WTC11 (cell line): ENCODE measurements at regions of chr10 and their contacts with region 1.

Region 1: GRCh38 chr10:42753126-42753506 is 29.5 kb upstream of the BMS1 start:
- DNase-seq: peak; percentile 91
- ATAC-seq: peak; percentile 84
- H3K4me3 Mint-ChIP-seq: peak overlapping the region; percentile 76
- H3K27ac Mint-ChIP-seq: no peak overlapping the region
- H3K4me1 Mint-ChIP-seq: no peaks in the 10 kb centered on the region; the same call in 1 of the 2 replicates
- H3K27me3 Mint-ChIP-seq: peaks cover 85% of the 10 kb centered on the region
- CTCF ChIP-seq: peak; percentile 75

Region 2: GRCh38 chr10:42734536-42734935 is 18.6 kb before region 1 on chr10:
- CTCF ChIA-PET with region 1: interaction called, 12 read pairs
- POLR2A ChIA-PET with region 1: no interaction called
- DNase-seq: no peak
- ATAC-seq: no peak
- H3K4me3 Mint-ChIP-seq: no peak overlapping the region
- H3K27ac Mint-ChIP-seq: no peak overlapping the region
- H3K4me1 Mint-ChIP-seq: peaks cover 5% of the 10 kb centered on the region
- H3K27me3 Mint-ChIP-seq: peaks cover 10% of the 10 kb centered on the region
- CTCF ChIP-seq: no peak

Region 3: GRCh38 chr10:42782446-42783180 is 29.5 kb after region 1 on chr10 and contains the start of gene BMS1:
- CTCF ChIA-PET with region 1: interaction called, 27 read pairs
- POLR2A ChIA-PET with region 1: interaction called, 8 read pairs
- DNase-seq: peak; percentile 88
- ATAC-seq: peak; percentile 92
- H3K4me3 Mint-ChIP-seq: peak within 1 kb of the TSS; percentile 95
- H3K27ac Mint-ChIP-seq: peak within 1 kb of the TSS; percentile 93
- H3K4me1 Mint-ChIP-seq: no peaks in the 10 kb centered on the region
- H3K27me3 Mint-ChIP-seq: peaks cover 35% of the 10 kb centered on the region
- CTCF ChIP-seq: no peak
- total RNA-seq, gene BMS1: 31.7 to 37.7 TPM (median 31.9 TPM) in 3 replicates

Region 4: DNA sequence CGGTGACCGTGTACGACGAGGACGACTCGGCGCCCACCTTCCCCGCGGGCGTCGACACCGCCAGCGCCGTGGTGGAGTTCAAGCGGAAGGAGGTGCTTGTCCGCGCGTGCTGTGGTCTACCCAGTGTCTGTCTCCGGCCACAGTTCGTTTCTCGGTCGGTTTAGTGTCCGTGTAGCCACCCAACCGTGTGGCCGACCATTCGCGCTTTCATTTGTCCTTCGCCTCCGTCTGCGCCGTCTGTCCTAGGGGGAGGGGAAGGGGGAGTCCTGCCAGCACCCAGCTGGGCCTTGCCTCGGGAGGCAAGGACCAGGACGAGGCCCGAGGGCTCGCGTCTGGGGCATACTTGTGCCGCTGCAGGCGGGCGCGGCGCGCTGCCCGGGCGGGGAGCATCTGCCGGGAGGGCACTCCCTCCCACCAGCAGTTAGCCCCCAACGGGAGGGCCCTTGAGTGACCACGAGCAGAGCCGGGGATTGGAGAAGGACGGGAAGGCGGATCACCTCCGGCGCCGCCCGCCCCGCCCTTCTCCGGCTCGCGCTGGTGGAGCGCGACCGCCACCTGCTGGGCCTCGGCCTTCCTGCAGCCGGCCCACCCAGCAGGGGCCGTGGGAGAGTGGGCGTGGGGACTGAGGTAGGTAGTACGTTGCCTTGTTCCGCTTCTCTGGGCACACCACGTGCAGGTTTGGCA is 352.1 kb after region 1 on chr10:
- CTCF ChIA-PET with region 1: interaction called, 12 read pairs
- POLR2A ChIA-PET with region 1: no interaction called
- DNase-seq: peak; percentile 83
- ATAC-seq: peak; percentile 85
- H3K4me3 Mint-ChIP-seq: peak overlapping the region; percentile 72
- H3K27ac Mint-ChIP-seq: no peak overlapping the region
- H3K4me1 Mint-ChIP-seq: no peaks in the 10 kb centered on the region
- H3K27me3 Mint-ChIP-seq: peaks cover 22% of the 10 kb centered on the region
- CTCF ChIP-seq: peak; percentile 95